OCI-LY7 (cell line): ENCODE measurements at regions of chr9 and their contacts with region 1.

Region 1: GRCh38 chr9:20622330-20623020 is at the start of gene MLLT3:
- DNase-seq: peak; percentile 94
- H3K4me3 ChIP-seq: peak within 1 kb of the TSS; percentile 73
- H3K27ac ChIP-seq: peak within 1 kb of the TSS; percentile 44
- H3K4me1 ChIP-seq: peaks cover 20% of the 10 kb centered on the region
- CTCF ChIP-seq: 0 out of 2 replicates have a peak, but pooled peaks have one; percentile 27
- total RNA-seq, gene MLLT3: 7.1 and 7.8 TPM in 2 replicates

Region 2: DNA sequence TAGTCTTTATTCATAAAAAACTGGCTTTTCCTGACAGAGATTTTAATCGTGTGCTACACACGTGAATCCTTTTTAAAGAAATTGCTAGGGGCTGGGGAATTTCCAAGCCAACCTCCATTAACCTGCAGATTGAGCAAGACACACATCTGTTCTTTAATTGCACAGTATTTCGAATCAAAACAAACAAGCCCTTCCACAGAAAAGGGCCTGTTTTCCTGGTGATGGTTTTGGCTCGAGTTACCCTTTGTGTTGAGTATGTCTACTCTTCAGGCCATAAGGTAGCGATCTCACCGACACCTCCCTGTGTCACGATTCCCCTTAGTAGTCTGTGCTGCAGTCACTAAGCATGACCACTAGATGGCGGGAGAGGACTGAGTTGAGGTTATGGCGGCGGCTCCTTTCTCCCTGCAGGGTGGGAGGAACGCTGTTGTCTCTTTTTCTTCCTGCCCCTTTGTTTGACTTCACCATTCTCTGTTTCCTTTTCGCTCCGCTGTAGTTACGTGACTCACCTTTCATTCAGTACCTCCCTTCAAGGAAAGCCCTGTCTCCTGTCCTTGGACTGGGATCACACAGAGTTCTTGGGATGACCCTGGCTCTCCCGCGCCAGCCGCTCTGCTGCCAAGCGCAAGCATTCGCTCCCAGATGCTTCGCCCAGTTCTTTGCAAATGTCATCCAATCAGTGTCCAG is 696.5 kb before region 1 on chr9:
- CTCF ChIA-PET with region 1: no interaction called
- POLR2A ChIA-PET with region 1: no interaction called
- intact Hi-C with region 1: loop called (anchors 5 kb)
- DNase-seq: peak; percentile 72
- H3K4me3 ChIP-seq: no peak overlapping the region
- H3K27ac ChIP-seq: no peak overlapping the region
- H3K4me1 ChIP-seq: no peaks in the 10 kb centered on the region
- CTCF ChIP-seq: peak; percentile 96

Region 3: DNA sequence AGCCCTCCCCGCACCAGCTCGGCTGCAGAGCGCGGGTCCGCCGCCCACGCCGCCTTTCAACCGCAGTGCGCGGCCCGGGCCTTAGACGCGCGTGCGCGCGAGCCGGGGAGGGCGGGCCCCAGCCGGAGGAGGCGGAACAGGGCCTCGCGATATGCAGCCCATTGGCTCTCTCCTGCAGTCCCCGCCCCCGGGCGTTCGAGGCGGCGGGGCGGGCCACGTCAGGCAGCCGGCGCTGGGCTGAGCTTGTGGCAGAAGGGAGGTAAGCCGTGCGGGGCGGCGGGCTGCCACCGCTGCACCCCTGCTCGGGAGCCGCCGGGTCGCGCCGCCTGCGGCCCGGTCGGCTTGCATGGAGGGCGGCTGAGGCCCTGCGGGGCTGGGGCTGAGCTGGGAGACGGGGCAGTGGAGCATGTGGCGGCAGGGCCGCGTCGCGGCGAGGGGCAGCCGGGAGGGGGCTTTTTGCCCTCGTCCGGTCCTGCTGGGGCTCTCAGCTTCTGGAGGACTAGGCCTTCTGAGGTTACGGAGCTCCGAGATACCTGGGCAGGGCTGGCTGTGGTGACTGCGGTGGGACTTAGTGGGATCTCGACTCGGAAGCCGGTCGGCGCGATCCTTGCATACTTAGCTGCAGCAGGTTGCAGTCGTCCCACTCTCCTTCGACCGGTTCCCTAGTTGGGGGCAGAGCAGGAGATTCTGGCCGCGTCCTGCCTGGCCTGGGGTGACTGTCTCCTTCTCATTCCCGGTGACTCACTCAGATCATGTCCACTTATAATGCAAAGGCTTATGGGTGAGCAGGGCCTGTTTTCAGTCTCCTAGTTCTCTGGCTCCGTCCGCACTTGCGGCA is 61.8 kb after region 1 on chr9 and contains the start of gene FOCAD:
- CTCF ChIA-PET with region 1: no interaction called
- POLR2A ChIA-PET with region 1: interaction called, 7 read pairs
- intact Hi-C with region 1: loop called (anchors 1 kb)
- DNase-seq: peak; percentile 95
- H3K4me3 ChIP-seq: peak within 1 kb of the TSS; percentile 83
- H3K27ac ChIP-seq: peak within 1 kb of the TSS; percentile 29
- H3K4me1 ChIP-seq: peaks cover 16% of the 10 kb centered on the region
- CTCF ChIP-seq: no peak
- total RNA-seq, gene FOCAD: 12.4 and 13.8 TPM in 2 replicates

Region 4: DNA sequence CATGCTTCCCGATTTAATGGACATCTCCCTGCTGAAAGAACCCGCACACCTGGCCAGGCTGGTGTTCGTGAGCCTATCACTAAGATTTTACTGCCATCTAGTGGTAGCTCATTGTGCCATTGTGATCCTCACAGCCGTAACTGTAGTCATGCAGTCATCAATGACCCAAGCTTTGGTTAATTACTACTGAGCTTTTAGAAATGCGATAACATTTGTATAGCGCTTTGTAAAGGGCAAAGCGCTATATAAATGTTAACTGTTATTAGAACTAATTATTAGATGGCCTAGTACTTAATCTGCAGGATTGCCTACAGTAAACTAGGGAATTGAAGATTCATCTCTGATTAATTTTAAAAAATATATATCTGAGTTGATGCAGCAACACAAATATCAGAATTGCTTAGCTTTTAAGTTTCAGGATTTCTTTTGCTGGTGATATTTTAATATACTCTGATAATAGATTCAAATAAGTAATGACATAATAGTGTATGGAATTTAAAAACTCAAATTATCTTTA is 318.8 kb after region 1 on chr9:
- CTCF ChIA-PET with region 1: interaction called, 3 read pairs
- POLR2A ChIA-PET with region 1: interaction called, 6 read pairs
- intact Hi-C with region 1: loop called (anchors 1 kb)
- DNase-seq: peak; percentile 84
- H3K4me3 ChIP-seq: no peak overlapping the region
- H3K27ac ChIP-seq: no peak overlapping the region
- H3K4me1 ChIP-seq: no peaks in the 10 kb centered on the region
- CTCF ChIP-seq: peak; percentile 95

Region 5: DNA sequence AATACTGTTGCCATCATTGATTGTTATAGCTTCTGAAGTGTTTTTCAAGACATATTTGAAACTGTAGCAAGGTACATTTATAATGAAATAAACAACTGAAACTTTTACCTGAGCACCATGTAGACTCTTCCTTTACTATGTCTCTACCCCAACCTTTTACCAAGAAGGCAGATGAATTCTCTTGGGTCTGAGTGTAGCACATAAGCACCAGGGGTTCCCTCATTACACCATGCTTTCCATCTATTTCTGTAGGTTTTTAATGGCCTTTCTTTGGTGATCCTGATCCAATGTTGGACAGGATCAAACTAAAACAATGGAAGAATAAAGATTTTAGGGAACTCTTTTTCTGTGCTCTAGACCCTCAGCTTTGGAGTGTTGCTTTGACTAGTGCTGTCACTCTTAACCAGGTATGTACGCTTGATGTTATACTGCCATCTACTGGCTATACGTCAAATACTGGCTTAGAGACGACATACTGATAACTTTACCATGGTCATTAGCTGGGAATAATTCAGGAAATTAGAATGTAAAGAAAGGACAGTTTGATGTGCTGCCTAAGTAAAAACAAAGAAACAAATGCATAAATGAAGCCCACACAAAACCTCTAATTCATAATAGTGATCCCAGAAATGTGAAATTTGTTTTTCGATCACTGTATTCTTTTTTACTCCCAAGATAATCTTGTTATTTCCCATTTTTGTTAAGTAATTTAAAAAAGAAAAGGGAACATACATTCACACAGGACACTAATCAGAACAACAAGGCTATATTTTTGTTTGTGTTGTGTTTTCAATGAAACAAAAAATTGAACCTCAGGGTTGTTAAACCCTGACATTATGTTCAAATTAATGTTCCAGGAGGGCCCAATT is 488.5 kb after region 1 on chr9:
- CTCF ChIA-PET with region 1: no interaction called
- POLR2A ChIA-PET with region 1: no interaction called
- intact Hi-C with region 1: loop called (anchors 2 kb)
- DNase-seq: peak; percentile 78
- H3K4me3 ChIP-seq: no peak overlapping the region
- H3K27ac ChIP-seq: no peak overlapping the region
- H3K4me1 ChIP-seq: no peaks in the 10 kb centered on the region
- CTCF ChIP-seq: peak; percentile 96

Region 6: GRCh38 chr9:21491742-21492141 is 869.3 kb after region 1 on chr9:
- CTCF ChIA-PET with region 1: no interaction called
- POLR2A ChIA-PET with region 1: no interaction called
- intact Hi-C with region 1: no loop called
- DNase-seq: no peak
- H3K4me3 ChIP-seq: no peak overlapping the region
- H3K27ac ChIP-seq: no peak overlapping the region
- H3K4me1 ChIP-seq: no peaks in the 10 kb centered on the region
- CTCF ChIP-seq: no peak